Dorsolateral prefrontal cortex (tissue), 120 donors: ENCODE measurements at regions of chr14 and their contacts with region 1.

Region 1: GRCh38 chr14:73713803-73714655 is at the start of gene PNMA1:
- DNase-seq: peak; percentile 76 to 96 (median 90)
- H3K4me3 ChIP-seq: peak within 1 kb of the TSS; percentile 66 to 97 (median 88)
- H3K27ac ChIP-seq: peak within 1 kb of the TSS; percentile 82 to 100 (median 97)
- H3K27me3 ChIP-seq: no peaks in the 10 kb centered on the region
- CTCF ChIP-seq: peak in 6 of 56 donors; percentile 5 to 36 (median 15)
- total RNA-seq, gene PNMA1: 87.5 to 250 (median 176) TPM

Region 2: GRCh38 chr14:73491256-73492042 is 222.6 kb before region 1 on chr14:
- intact Hi-C with region 1: loop called in 1 of 2 experiments (anchors 10 kb)
- DNase-seq: peak in 9 of 10 donors; percentile 33 to 72 (median 61)
- H3K4me3 ChIP-seq: peak overlapping the region; percentile 62 to 90 (median 80)
- H3K27ac ChIP-seq: peak overlapping the region in 57 of 59 donors; percentile 19 to 93 (median 84)
- H3K27me3 ChIP-seq: no peaks in the 10 kb centered on the region
- CTCF ChIP-seq: no peak

Region 3: GRCh38 chr14:73644531-73645247 is 69.3 kb before region 1 on chr14 and contains the start of gene DNAL1:
- intact Hi-C with region 1: loop called (anchors 5 kb)
- DNase-seq: peak; percentile 89 to 96 (median 92)
- H3K4me3 ChIP-seq: peak within 1 kb of the TSS; percentile 65 to 100 (median 87)
- H3K27ac ChIP-seq: peak within 1 kb of the TSS; percentile 44 to 95 (median 88)
- H3K27me3 ChIP-seq: no peaks in the 10 kb centered on the region
- CTCF ChIP-seq: peak in 40 of 56 donors; percentile 11 to 65 (median 38)
- total RNA-seq, gene DNAL1: 17.3 to 60.9 (median 39.3) TPM

Region 4: GRCh38 chr14:73759714-73760597 is 45.9 kb after region 1 on chr14:
- intact Hi-C with region 1: loop called in 1 of 2 experiments (anchors 5 kb)
- DNase-seq: peak; percentile 80 to 95 (median 93)
- H3K4me3 ChIP-seq: peak overlapping the region; percentile 42 to 88 (median 77)
- H3K27ac ChIP-seq: peak overlapping the region; percentile 75 to 99 (median 96)
- H3K27me3 ChIP-seq: no peaks in the 10 kb centered on the region
- CTCF ChIP-seq: peak in 31 of 56 donors; percentile 4 to 46 (median 26)

Region 5: DNA sequence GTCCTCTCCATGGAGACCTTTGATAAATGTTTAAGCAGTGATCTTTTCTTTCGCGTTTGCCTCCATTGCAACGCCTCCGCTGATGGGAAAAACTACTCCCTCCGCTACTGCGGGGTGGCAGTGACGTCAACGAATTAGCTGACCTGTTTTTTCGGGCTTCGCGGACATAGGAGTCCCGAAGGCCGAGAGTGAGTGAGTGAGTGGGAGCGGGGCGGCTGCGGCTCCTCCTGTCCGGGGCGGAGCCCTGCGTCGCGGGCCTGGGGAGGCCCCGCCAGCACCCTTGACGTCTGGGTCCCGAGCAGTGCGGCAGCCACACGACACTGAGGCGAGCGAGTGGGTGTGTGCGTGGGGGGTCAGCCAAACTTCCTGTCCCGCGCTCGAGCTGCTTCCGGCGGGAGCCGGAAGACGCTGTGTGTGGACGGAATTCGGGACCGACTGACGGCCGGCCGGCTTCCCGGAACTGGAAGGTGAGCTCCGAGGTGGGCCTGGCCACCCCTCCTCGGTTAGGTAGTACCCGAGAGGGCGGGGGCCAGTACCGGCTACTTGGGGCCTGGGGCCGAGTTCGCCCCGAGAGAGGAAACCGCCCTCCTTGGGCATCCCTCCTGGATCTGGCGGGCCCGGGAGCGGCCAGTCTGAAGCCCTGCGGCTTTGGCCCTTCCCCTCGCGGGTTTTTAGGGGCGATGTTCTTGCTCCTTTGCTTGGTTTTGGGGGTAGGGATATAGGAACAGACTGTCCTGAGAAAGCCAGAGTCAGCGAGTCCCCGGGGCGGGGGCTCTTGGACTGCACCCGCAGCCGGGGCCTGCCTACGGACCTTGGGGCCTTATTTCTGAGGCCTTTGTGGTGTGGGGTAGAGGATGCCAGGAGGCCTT is 172.7 kb after region 1 on chr14 and contains the start of gene ZNF410:
- intact Hi-C with region 1: loop called in 1 of 2 experiments (anchors 5 kb)
- DNase-seq: peak; percentile 75 to 93 (median 88)
- H3K4me3 ChIP-seq: peak within 1 kb of the TSS; percentile 66 to 100 (median 91)
- H3K27ac ChIP-seq: peak within 1 kb of the TSS; percentile 52 to 98 (median 91)
- H3K27me3 ChIP-seq: no peaks in the 10 kb centered on the region
- CTCF ChIP-seq: peak in 19 of 56 donors; percentile 3 to 36 (median 11)
- total RNA-seq, gene ZNF410: 31.1 to 70.7 (median 43.5) TPM

Region 6: GRCh38 chr14:74018586-74019407 is 304.8 kb after region 1 on chr14 and contains the starts of genes BBOF1 and ENTPD5:
- intact Hi-C with region 1: loop called in 1 of 2 experiments (anchors 5 kb)
- DNase-seq: peak; percentile 73 to 94 (median 83)
- H3K4me3 ChIP-seq: peak within 1 kb of the TSS; percentile 66 to 98 (median 92)
- H3K27ac ChIP-seq: peak within 1 kb of the TSS; percentile 59 to 98 (median 90)
- H3K27me3 ChIP-seq: no peaks in the 10 kb centered on the region
- CTCF ChIP-seq: peak in 18 of 56 donors; percentile 4 to 41 (median 19)
- total RNA-seq, gene BBOF1: 4.1 to 17.0 (median 9.4) TPM
- total RNA-seq, gene ENTPD5: 6.0 to 19.1 (median 11.0) TPM